MCF 10A (cell line): ENCODE measurements at regions of chr12 and their contacts with region 1.

Region 1: GRCh38 chr12:9741726-9742125 is 8.8 kb upstream of the CLECL1 start:
- DNase-seq: no peak
- H3K4me3 Mint-ChIP-seq: no peak overlapping the region
- H3K27ac Mint-ChIP-seq: no peak overlapping the region
- H3K4me1 Mint-ChIP-seq: peaks cover 8% of the 10 kb centered on the region
- H3K27me3 Mint-ChIP-seq: no peaks in the 10 kb centered on the region
- CTCF ChIP-seq: no peak

Region 2: DNA sequence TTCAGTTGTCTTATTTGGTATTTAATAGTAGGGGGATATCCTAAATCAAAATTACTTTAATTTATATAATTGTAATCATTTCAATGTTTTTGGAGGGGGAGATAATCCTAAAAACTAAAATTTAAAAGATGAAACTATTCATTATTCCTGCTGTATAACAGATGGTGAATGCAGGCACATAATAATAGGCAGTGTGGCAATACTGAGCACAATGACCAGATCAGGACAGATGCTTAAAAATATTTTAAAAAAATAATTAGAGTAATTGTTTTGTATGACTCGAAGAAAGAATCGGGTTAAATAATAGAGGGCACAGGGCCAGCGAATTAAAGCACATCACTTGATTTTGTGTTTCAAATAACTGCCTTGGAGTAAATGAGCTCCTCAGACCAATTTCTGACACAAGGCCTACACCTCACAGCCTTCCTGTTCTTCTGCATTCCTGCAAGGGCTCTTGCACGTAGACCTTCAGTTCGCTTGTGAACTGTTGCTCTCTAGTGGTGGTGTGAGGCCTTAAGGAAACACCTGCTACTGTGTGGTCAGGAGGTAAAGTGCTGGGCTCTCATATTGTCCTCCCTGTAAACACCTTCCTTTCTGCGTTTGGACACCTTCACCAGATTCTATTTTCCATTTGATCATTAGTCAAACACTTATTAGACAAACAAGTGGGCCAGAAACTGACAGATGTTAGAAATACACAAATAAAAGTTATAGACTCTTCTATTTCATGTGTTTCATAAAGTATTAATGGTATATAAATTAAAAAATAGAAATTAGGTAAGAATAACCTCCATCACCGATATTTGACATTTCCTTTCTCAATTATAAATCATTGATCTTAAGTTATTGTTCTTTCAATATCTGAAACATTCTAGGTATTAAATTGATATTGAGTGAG is 56.2 kb after region 1 on chr12:
- CTCF ChIA-PET with region 1: interaction called, 22 read pairs
- POLR2A ChIA-PET with region 1: no interaction called
- intact Hi-C with region 1: no loop called
- DNase-seq: peak; percentile 74
- H3K4me3 Mint-ChIP-seq: no peak overlapping the region
- H3K27ac Mint-ChIP-seq: no peak overlapping the region
- H3K4me1 Mint-ChIP-seq: no peaks in the 10 kb centered on the region
- H3K27me3 Mint-ChIP-seq: no peaks in the 10 kb centered on the region
- CTCF ChIP-seq: peak; percentile 47